ENCODE measurements at regions of chr16 and their contacts with region 1.

Region 1: GRCh38 chr16:84726079-84726668 is 26.4 kb downstream of the USP10 start:
- DNase-seq: peak; percentile 93 to 94
- H3K4me3 ChIP-seq: no peak overlapping the region
- H3K27ac ChIP-seq: peak overlapping the region; percentile 40 to 49
- H3K4me1 ChIP-seq: peaks cover 6 to 9% of the 10 kb centered on the region in 2 donors
- H3K27me3 ChIP-seq: no peaks in the 10 kb centered on the region
- CTCF ChIP-seq: peak; percentile 91 to 95 (median 93)
- POLR2A ChIP-seq: no peak

Region 2: GRCh38 chr16:84672276-84673202 is 53.6 kb before region 1 on chr16:
- intact Hi-C with region 1: loop called (anchors 10 kb)
- DNase-seq: peak; percentile 70
- H3K4me3 ChIP-seq: no peak overlapping the region
- H3K27ac ChIP-seq: no peak overlapping the region
- H3K4me1 ChIP-seq: no peaks in the 10 kb centered on the region
- H3K27me3 ChIP-seq: no peaks in the 10 kb centered on the region
- CTCF ChIP-seq: peak; percentile 81 to 91 (median 88)
- POLR2A ChIP-seq: no peak

Measured in uterus (tissue), 4 donors.